Aorta (tissue), 5 donors: ENCODE measurements at regions of chr3 and their contacts with region 1.

Region 1: DNA sequence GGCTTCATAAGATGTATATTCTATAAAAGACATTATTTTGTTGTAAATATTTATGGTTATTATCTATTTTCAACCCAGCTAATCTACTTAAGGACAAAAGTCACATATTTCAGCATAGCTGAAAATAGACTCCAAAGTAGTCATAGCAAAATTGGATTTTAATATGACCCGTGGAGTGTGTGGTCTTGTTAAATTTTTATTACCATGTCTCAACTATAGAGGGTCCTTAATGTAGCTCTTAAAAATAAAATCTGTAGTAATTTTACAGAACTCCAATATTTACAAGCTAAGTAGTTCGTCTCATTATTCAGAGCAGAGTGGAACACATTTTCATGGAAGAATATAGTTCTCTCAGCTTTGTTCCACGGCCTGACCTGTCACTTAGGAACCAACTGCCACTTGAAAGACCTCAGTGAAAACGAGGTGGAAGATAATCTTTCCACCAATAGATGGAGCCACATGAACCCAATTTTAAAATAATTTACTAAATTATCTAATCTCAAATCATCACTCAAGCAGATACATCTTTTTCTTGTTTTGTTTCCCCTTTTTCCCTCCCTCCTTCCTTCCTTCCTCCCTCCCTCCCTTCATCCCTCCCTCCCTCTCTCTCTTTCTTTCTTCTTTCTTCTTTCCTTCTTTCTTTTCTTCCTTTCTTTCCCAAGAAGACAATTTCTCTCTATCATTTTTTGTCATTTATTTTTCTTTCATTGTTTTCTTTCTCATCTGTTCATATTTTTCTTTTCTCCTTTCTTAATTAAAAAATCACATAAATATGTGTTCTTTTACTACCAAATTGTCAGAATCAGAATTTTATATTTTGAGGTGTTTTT is 97.2 kb downstream of the CLDN1 start:
- DNase-seq: no peak
- ATAC-seq: no peak
- H3K4me3 ChIP-seq: no peak overlapping the region
- H3K27ac ChIP-seq: no peak overlapping the region
- H3K4me1 ChIP-seq: no peaks in the 10 kb centered on the region
- H3K27me3 ChIP-seq: no peaks in the 10 kb centered on the region

Region 2: DNA sequence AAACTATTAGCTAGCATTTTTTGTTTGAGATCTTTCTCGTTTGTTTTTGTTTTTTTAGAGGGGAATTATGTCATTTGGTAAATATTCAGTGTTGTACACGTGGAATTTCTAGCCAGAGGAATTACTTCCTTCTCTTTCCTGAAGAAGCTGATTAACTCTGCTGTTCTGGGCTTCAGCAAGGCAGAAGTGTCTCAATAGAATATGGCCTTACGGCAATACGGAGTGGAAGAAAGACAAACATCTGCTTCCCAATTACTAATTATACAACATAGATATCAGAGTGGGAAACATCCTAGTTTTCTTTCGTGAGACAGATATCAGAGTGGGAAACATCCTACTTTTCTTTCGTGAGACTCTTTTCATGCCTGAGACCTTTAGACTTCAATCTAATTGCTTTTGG is 116.3 kb before region 1 on chr3:
- intact Hi-C with region 1: no loop called
- DNase-seq: no peak
- ATAC-seq: no peak
- H3K4me3 ChIP-seq: no peak overlapping the region
- H3K27ac ChIP-seq: no peak overlapping the region
- H3K4me1 ChIP-seq: peaks cover 0 to 2% of the 10 kb centered on the region in 2 donors
- H3K27me3 ChIP-seq: no peaks in the 10 kb centered on the region

Region 3: GRCh38 chr3:190265796-190266195 is 40.7 kb after region 1 on chr3:
- intact Hi-C with region 1: no loop called
- DNase-seq: no peak
- ATAC-seq: no peak
- H3K4me3 ChIP-seq: no peak overlapping the region
- H3K27ac ChIP-seq: no peak overlapping the region
- H3K4me1 ChIP-seq: no peaks in the 10 kb centered on the region
- H3K27me3 ChIP-seq: no peaks in the 10 kb centered on the region

Region 4: DNA sequence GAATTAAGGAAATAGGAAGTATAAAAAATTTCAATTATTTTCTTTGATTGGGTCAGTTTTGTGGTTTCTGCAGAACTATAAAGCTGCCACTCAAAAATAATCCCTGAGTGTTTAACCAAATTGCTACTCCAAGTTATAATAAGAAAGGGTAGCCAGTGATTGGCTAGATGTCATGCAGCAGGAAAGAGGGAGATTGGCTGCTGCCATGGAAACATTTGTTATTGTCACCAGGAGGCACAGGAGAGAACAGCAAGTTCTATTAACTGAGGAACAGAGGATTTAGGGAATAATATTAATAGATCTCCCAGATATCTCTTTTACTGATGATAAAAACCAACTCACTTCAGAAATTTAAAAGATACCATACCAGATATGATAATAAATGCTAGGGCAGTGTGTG is 54.6 kb after region 1 on chr3:
- intact Hi-C with region 1: no loop called
- DNase-seq: no peak
- ATAC-seq: no peak
- H3K4me3 ChIP-seq: no peak overlapping the region
- H3K27ac ChIP-seq: no peak overlapping the region
- H3K4me1 ChIP-seq: no peaks in the 10 kb centered on the region
- H3K27me3 ChIP-seq: no peaks in the 10 kb centered on the region

Region 5: GRCh38 chr3:190321789-190322603 is 96.9 kb after region 1 on chr3 and contains the start of gene CLDN1:
- intact Hi-C with region 1: loop called (anchors 2 to 5 kb)
- DNase-seq: peak; percentile 88 to 94
- ATAC-seq: peak; percentile 94
- H3K4me3 ChIP-seq: peak within 1 kb of the TSS in 1 of 2 donors; percentile 20
- H3K27ac ChIP-seq: no peak within 1 kb of the TSS
- H3K4me1 ChIP-seq: no peaks in the 10 kb centered on the region
- H3K27me3 ChIP-seq: no peaks in the 10 kb centered on the region
- total RNA-seq, gene CLDN1: 1.8 to 4.5 TPM

Region 6: DNA sequence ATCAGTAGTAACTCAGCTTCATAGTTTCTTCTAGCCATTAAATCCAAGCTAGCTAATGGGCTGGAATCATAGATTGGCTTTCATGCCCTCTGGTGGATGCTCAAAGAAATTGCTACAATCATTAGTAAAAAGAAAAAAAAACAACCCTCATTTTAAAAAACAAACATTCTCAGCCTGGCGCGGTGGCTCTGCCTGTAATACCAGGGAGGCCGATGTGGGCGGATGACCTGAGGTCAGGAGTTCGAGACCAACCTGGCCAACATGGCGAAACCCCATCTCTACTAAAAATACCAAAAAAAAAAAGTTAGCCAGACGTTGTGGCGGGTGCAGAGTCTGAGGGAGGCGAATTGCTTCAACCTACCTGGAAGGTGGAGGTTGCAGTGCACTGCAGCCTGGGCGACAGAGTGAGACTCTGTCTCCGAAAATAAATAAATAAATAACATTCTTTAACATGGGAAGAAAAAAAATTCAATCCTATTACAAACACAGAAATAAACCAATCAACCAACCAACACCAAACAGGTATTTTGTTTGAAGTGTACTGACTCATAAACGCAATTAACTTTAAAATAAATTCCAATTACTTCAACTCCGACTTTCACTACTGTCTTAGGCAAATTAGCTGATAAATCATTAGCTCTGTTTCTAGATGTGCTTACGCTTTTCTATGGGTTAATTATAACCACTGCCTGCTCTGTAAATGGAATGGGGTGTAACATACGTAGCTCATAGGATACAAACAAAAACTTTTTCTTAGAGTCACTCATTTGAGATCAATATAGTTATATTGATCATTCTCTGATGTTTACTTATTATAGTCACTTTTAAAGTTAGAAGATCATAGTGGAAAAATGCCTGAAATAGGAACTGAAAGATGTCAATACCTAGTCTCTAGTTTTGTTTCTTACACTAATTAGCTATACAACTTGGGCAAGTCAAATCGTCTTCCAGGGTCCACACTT is 199.7 kb after region 1 on chr3:
- intact Hi-C with region 1: loop called (anchors 10 kb)
- DNase-seq: peak; percentile 59 to 77
- ATAC-seq: peak; percentile 84
- H3K4me3 ChIP-seq: no peak overlapping the region
- H3K27ac ChIP-seq: no peak overlapping the region
- H3K4me1 ChIP-seq: no peaks in the 10 kb centered on the region
- H3K27me3 ChIP-seq: no peaks in the 10 kb centered on the region

Region 7: GRCh38 chr3:190566043-190566933 is 341.2 kb after region 1 on chr3:
- intact Hi-C with region 1: no loop called
- DNase-seq: peak; percentile 89 to 95
- ATAC-seq: peak; percentile 85
- H3K4me3 ChIP-seq: no peak overlapping the region
- H3K27ac ChIP-seq: no peak overlapping the region
- H3K4me1 ChIP-seq: peaks cover 0 to 2% of the 10 kb centered on the region in 2 donors
- H3K27me3 ChIP-seq: no peaks in the 10 kb centered on the region